ENCODE measurements at regions of chr1 and their contacts with region 1.

Region 1: GRCh38 chr1:99818063-99818699 is 32.0 kb upstream of the AGL start:
- DNase-seq: no peak
- ATAC-seq: peak; percentile 76

Region 2: DNA sequence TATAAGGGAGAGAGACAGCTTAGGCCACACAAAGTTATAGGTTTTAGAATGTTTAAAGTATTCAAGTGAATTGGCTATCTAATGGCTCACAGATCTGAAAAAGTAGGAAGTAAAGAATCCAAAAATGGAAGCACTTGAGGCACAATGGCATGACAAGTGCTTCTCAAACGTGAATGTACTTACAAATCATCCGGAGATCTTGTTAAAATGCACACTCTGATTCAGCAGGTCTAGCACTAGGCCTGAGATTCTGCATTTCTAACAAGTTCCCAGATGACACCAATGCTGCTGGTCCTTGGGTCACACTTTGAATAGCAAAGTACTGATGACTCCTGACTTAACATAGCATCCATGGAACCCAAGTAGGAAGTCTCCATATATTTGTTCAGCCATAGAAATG is 11.1 kb after region 1 on chr1:
- intact Hi-C with region 1: no loop called
- DNase-seq: no peak
- ATAC-seq: no peak

Region 3: GRCh38 chr1:99849744-99850458 is 31.7 kb after region 1 on chr1 and contains the start of gene AGL:
- intact Hi-C with region 1: loop called (anchors 5 kb)
- DNase-seq: peak; percentile 93
- ATAC-seq: peak; percentile 97
- total RNA-seq, gene AGL: 56.3 TPM

Measured in Right ventricle myocardium inferior (tissue), 1 donor.